Activated CD8-positive, alpha-beta memory T cell treated with anti-CD3 and anti-CD28 coated beads, Interleukin-2, amount 10 ng/mL, durations not matched to agents 7 days and 5 days (primary cell): ENCODE measurements at regions of chr1 and their contacts with region 1.

Region 1: GRCh38 chr1:168342572-168343280 is 62.0 kb downstream of the TBX19 start:
- DNase-seq: peak; percentile 94
- ATAC-seq: peak; percentile 93
- H3K4me3 Mint-ChIP-seq: no peak overlapping the region
- H3K27ac Mint-ChIP-seq: peak overlapping the region; percentile 87
- H3K4me1 Mint-ChIP-seq: peaks cover 75% of the 10 kb centered on the region
- H3K27me3 Mint-ChIP-seq: no peaks in the 10 kb centered on the region

Region 2: DNA sequence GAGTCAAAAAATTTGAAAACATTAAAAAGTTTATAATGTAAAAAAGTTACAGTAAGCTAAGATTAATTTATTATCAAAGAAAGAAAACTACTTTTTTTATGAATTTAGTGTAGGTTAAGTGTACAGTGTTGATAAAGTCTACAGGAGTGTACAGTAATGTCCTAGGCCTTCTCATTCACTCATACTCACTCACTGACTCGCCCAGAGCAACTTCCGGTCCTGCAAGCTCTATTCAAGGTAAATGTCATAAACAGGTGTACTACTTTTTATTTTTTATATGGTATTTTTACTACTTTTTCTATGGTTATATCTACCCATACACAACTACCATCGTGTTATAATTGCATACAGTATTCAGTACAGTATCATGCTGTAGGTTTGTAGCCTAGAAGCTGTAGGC is 12.4 kb before region 1 on chr1:
- CTCF ChIA-PET with region 1: interaction called, 12 read pairs
- DNase-seq: no peak
- ATAC-seq: no peak
- H3K4me3 Mint-ChIP-seq: no peak overlapping the region
- H3K27ac Mint-ChIP-seq: no peak overlapping the region
- H3K4me1 Mint-ChIP-seq: peaks cover under 1% of the 10 kb centered on the region
- H3K27me3 Mint-ChIP-seq: no peaks in the 10 kb centered on the region

Region 3: DNA sequence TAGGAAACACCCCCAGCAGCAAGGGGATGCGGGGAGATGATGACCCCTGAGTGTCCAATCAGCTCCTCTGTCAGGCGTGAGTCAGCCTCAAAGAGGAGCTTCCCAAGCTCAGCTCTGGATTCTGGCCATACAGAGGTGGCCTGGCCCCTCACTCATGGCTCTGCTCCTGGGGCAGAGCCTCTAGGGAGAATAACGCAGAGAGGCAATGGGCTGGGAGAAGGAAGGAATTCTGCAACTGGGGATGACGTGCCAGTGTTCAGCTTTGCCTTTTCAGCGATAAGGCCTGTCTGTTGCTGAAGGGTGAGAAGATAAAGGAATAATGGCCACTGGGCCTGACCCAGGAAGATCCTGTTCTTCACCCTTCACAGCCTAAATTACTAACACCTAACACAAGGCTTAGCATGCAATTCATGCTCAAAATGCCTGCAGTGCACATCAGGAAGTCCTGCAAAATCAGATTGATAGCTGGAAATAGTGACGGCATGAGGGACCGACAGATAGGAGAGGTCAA is 30.2 kb after region 1 on chr1:
- CTCF ChIA-PET with region 1: interaction called, 35 read pairs
- DNase-seq: no peak
- ATAC-seq: no peak
- H3K4me3 Mint-ChIP-seq: no peak overlapping the region
- H3K27ac Mint-ChIP-seq: no peak overlapping the region
- H3K4me1 Mint-ChIP-seq: no peaks in the 10 kb centered on the region
- H3K27me3 Mint-ChIP-seq: no peaks in the 10 kb centered on the region

Region 4: GRCh38 chr1:168421399-168422004 is 78.8 kb after region 1 on chr1:
- CTCF ChIA-PET with region 1: interaction called, 31 read pairs
- DNase-seq: peak; percentile 61
- ATAC-seq: peak; percentile 98
- H3K4me3 Mint-ChIP-seq: peak overlapping the region; percentile 55
- H3K27ac Mint-ChIP-seq: peak overlapping the region; percentile 96
- H3K4me1 Mint-ChIP-seq: peaks cover 34% of the 10 kb centered on the region
- H3K27me3 Mint-ChIP-seq: no peaks in the 10 kb centered on the region

Region 5: DNA sequence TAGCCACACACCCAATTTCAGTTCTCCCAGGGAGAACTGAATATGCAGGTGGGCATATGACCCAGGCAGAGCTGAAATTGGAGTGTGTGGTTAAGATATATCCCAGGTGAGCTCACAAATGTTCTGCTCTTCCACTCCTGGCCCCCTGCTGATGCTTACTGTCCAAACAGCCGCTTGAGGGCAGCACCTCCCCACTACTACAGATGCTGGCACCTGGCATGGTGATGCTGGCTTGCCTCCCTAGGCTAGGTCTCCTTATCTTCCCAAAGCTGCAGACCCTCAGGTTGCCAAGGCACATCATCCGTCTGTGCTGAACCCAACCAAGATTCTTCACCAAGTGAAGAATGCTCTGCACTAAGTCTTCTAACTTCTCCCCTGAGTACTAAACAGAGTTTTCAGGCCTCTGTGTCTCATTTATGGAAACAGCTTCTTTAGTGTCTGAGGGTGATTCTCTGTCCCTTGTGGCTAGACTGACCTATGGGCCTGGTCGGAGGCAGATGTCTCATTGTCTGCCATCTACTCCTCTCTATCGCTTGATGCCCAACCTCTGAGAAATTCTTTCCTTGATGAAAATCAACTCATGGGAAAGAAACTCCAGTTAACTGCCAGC is 260.9 kb after region 1 on chr1:
- CTCF ChIA-PET with region 1: interaction called, 25 read pairs
- DNase-seq: peak; percentile 80
- ATAC-seq: peak; percentile 98
- H3K4me3 Mint-ChIP-seq: no peak overlapping the region
- H3K27ac Mint-ChIP-seq: no peak overlapping the region
- H3K4me1 Mint-ChIP-seq: peaks cover 3% of the 10 kb centered on the region
- H3K27me3 Mint-ChIP-seq: peaks cover 6% of the 10 kb centered on the region